ENCODE measurements at regions of chr7 and their contacts with region 1.

Region 1: DNA sequence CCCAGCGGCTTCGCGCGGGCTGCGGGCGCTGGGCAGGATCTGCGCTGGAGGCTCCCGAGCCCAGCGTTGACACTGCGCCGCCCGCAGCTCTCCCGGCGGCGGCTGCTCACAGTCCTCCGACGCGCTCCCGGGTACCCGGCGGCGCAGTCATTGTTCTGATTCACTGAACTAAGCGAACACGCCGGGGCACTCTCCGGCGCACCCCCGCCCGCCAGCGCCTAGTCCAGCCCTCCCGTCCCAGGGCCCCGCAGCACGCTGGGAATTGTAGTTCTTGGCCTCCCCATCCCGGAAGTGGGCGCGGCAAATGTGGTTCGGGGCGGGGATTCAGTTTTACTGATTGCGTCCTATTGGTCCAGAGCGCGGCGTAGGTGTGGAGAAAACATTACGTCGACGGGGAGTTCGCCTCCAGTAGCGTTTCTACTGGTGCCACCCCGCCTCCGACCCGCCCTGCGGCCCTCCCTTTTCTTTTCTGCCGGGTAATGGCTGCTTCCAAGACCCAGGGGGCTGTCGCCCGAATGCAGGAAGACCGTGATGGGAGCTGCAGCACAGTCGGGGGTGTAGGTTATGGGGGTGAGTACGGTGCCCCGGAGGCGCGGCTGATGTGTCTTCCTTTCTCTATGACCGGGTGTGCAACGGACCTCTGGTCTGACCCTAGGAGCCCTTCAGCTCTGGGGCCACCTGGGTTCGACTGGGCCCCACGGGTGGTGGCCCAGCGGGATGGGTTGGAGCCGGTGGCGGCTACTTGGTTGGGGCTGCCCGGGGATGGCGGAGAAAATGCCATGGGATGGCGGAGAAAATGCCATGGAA is at the starts of genes DOCK4 and ZNF277:
- DNase-seq: peak; percentile 99
- ATAC-seq: peak; percentile 91
- H3K4me3 ChIP-seq: peak within 1 kb of the TSS; percentile 71
- H3K27ac ChIP-seq: peak within 1 kb of the TSS; percentile 62
- H3K4me1 ChIP-seq: peaks cover 3% of the 10 kb centered on the region; the same call in 1 of the 2 replicates
- H3K27me3 ChIP-seq: no peaks in the 10 kb centered on the region
- CTCF ChIP-seq: no peak
- POLR2A ChIP-seq: peak; percentile 87
- RAD21 ChIP-seq: peak; percentile 23; the same call in 1 of the 2 replicates
- total RNA-seq, gene DOCK4: 12.2 and 14.2 TPM in 2 replicates
- total RNA-seq, gene ZNF277: 21.3 and 45.0 TPM in 2 replicates

Region 2: DNA sequence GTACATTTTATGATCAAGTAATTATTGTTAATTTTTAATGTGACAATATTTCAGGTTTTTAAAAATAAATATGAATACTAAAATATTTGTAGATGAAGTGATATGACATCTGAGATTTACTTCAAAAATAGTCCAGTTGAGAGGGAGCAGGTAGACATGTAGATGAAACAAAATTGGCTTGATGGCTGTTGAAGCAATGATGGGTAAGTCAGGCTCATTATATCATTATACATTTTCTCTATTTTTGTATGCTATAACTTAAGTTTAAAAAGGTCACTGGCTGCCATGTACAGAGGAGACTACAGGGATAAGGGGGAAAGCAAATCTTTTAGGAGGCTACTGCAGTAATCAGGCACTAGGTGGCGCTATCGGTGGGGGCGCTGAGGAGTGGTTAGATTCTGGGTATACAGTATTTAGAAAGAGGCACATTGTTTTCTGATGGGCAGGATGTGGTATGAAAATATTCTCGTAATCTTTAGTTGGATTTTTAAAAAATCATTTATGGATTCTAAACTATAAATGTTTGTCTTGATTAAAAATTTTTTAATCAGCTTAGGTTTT is 454.3 kb before region 1 on chr7:
- CTCF ChIA-PET with region 1: interaction called, 3 read pairs
- POLR2A ChIA-PET with region 1: no interaction called
- dilution Hi-C with region 1: no loop called
- in situ Hi-C with region 1: loop called (anchors 25 kb)
- intact Hi-C with region 1: no loop called
- DNase-seq: peak; percentile 44
- ATAC-seq: peak; percentile 67
- H3K4me3 ChIP-seq: no peak overlapping the region
- H3K27ac ChIP-seq: no peak overlapping the region
- H3K4me1 ChIP-seq: peaks cover 2% of the 10 kb centered on the region; the same call in 1 of the 2 replicates
- H3K27me3 ChIP-seq: no peaks in the 10 kb centered on the region
- CTCF ChIP-seq: peak; percentile 80
- POLR2A ChIP-seq: no peak
- RAD21 ChIP-seq: peak; percentile 75

Region 3: GRCh38 chr7:111855161-111855856 is 351.1 kb before region 1 on chr7:
- CTCF ChIA-PET with region 1: no interaction called
- POLR2A ChIA-PET with region 1: no interaction called
- dilution Hi-C with region 1: no loop called
- in situ Hi-C with region 1: no loop called
- intact Hi-C with region 1: loop called (anchors 2 kb)
- DNase-seq: peak; percentile 79
- ATAC-seq: peak; percentile 97
- H3K4me3 ChIP-seq: no peak overlapping the region
- H3K27ac ChIP-seq: no peak overlapping the region
- H3K4me1 ChIP-seq: no peaks in the 10 kb centered on the region
- H3K27me3 ChIP-seq: no peaks in the 10 kb centered on the region
- CTCF ChIP-seq: peak; percentile 67
- POLR2A ChIP-seq: no peak
- RAD21 ChIP-seq: peak; percentile 68

Region 4: DNA sequence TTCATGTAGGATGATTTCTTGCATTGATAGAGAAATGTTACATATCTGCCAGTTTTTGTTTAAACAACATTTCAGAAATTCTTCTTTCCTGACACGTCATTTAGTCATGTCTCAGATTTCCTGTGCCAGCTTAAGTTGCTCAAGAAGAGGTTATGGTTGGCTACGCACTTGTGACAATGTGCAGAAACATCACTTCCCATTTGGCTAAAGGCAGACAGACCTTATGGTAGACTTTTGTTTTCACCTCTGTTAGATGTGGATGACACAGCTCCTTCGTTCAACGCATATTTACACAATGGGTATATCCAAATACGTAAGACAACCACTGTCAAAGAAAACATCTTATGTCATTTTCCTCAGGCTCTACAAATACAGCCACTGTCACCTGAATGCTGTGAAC is 126.0 kb before region 1 on chr7:
- CTCF ChIA-PET with region 1: no interaction called
- POLR2A ChIA-PET with region 1: interaction called, 3 read pairs
- dilution Hi-C with region 1: no loop called
- in situ Hi-C with region 1: no loop called
- intact Hi-C with region 1: loop called (anchors 2 kb)
- DNase-seq: peak; percentile 96
- ATAC-seq: peak; percentile 85
- H3K4me3 ChIP-seq: no peak overlapping the region
- H3K27ac ChIP-seq: no peak overlapping the region
- H3K4me1 ChIP-seq: peaks cover 6% of the 10 kb centered on the region
- H3K27me3 ChIP-seq: no peaks in the 10 kb centered on the region
- CTCF ChIP-seq: no peak
- POLR2A ChIP-seq: no peak
- RAD21 ChIP-seq: no peak

Region 5: DNA sequence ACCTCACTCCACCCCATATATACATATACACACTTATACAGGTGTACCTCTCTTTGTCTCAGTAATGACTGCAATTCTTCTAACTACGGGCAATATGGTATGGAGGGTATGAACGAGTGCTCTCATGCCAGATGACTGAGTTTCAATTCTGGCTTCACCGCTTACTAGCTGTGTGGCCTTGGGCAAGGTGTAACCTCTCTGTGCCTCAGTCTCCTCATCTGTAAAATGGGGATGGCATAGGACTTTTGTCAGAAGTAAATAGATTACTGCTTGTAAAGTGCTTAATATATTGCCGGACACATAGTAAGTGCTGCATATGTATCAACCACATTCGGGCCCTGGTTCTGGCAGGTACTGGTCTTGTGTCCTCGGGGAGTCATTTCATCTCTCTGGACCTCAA is 183.7 kb after region 1 on chr7:
- CTCF ChIA-PET with region 1: interaction called, 3 read pairs
- POLR2A ChIA-PET with region 1: no interaction called
- dilution Hi-C with region 1: no loop called
- in situ Hi-C with region 1: no loop called
- intact Hi-C with region 1: loop called (anchors 5 kb)
- DNase-seq: no peak
- ATAC-seq: no peak
- H3K4me3 ChIP-seq: no peak overlapping the region
- H3K27ac ChIP-seq: no peak overlapping the region
- H3K4me1 ChIP-seq: peaks cover 2% of the 10 kb centered on the region; the same call in 1 of the 2 replicates
- H3K27me3 ChIP-seq: peaks cover 6% of the 10 kb centered on the region; the same call in 1 of the 2 replicates
- CTCF ChIP-seq: no peak
- POLR2A ChIP-seq: no peak
- RAD21 ChIP-seq: no peak

Region 6: DNA sequence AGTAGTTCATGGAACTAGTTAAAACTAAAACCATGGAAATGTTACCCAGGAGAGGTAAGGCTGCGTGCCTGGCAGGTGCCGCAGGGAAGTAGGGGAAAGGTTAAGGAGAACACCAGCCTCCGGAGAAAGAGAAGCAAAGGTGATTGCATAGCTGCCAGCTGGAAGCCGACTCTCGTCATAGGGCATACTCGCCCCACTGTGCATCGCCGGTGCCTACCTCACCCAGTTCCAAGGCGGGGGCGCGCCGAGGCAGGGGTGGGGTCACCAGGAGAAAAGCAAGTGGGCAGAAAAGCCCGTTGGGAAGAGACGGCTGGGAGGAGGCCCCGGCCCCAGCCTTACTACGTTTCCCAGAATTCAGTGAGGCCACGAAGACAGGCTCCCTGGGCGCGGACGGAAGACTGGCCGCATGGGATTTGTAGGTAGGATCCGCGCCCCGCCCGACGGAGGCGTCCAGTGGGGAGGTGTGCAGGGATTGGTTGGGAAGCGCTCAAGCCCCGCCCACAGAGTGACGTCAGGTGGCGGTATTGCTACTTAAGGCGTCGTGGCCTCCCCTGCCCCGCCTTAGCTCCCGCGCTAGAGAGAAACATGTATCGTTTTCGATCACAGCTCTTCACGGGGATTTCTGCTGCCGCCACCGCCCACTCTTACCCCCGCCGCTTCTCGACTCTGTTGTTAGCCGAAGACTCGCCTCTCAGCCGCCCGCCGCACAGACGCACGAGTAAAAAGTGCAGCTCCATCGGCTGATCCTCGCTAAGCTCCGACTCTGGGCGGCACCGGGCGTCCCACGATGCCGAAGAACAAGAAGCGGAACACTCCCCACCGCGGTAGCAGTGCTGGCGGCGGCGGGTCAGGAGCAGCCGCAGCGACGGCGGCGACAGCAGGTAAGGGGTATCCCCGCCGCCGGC is 243.7 kb after region 1 on chr7 and contains the start of gene IFRD1:
- CTCF ChIA-PET with region 1: no interaction called
- POLR2A ChIA-PET with region 1: no interaction called
- dilution Hi-C with region 1: no loop called
- in situ Hi-C with region 1: no loop called
- intact Hi-C with region 1: loop called (anchors 2 kb)
- DNase-seq: peak; percentile 98
- ATAC-seq: peak; percentile 90
- H3K4me3 ChIP-seq: peak within 1 kb of the TSS; percentile 85
- H3K27ac ChIP-seq: peak within 1 kb of the TSS; percentile 94
- H3K4me1 ChIP-seq: no peaks in the 10 kb centered on the region; the same call in 1 of the 2 replicates
- H3K27me3 ChIP-seq: no peaks in the 10 kb centered on the region
- CTCF ChIP-seq: no peak
- POLR2A ChIP-seq: peak; percentile 100
- RAD21 ChIP-seq: no peak
- total RNA-seq, gene IFRD1: 18.3 and 24.2 TPM in 2 replicates

Measured in IMR-90 (cell line).